ENCODE measurements at regions of chr13 and their contacts with region 1.

Region 1: GRCh38 chr13:113393563-113394338 is 29.8 kb upstream of the GRTP1 start:
- DNase-seq: peak; percentile 90
- H3K4me3 ChIP-seq: peak overlapping the region; percentile 59 to 64 (median 64)
- H3K27ac ChIP-seq: peak overlapping the region; percentile 47 to 67 (median 58)
- H3K4me1 ChIP-seq: peaks cover 0 to 16% (median 9%) of the 10 kb centered on the region in 4 donors
- H3K27me3 ChIP-seq: no peaks in the 10 kb centered on the region
- CTCF ChIP-seq: peak in 3 of 4 experiments; percentile 19 to 96 (median 58)
- EP300 ChIP-seq: no peak
- POLR2A ChIP-seq: no peak

Region 2: DNA sequence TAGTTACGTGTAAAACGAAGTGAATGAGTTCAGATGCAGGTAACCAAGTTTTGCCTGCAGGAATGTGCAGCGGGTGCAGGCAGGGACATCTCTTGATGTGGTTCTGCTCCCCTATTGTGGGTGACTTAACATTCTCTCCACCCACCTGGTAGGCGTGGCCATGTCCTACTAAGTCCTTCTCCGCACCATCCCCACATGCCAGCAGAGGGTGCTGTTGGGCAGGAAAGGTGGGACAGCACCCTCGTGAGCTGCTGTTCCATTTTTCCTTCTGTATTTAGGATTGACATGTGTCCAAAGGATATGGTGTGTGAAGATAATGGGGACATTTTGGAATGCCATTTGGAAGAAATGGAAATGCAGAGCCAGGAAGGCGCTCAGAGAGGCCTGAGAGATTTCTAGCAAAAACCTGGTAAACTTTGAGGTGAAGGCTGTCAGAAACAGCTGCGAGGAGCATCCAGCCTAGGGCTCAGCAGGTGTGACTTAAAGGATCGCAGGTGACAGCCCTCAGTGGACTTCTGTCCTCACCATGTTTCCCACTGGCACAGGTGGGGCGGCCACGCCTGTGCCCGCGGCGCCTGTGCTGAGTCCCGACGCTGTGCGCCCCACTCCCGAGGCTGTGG is 451.0 kb before region 1 on chr13:
- intact Hi-C with region 1: loop called (anchors 2 kb)
- DNase-seq: peak; percentile 96
- H3K4me3 ChIP-seq: peak overlapping the region in 3 of 4 donors; percentile 47 to 68 (median 54)
- H3K27ac ChIP-seq: peak overlapping the region; percentile 21 to 70 (median 43)
- H3K4me1 ChIP-seq: peaks cover 0 to 18% (median 12%) of the 10 kb centered on the region in 4 donors
- H3K27me3 ChIP-seq: no peaks in the 10 kb centered on the region
- CTCF ChIP-seq: peak; percentile 74 to 91 (median 86)
- EP300 ChIP-seq: no peak
- POLR2A ChIP-seq: no peak

Region 3: DNA sequence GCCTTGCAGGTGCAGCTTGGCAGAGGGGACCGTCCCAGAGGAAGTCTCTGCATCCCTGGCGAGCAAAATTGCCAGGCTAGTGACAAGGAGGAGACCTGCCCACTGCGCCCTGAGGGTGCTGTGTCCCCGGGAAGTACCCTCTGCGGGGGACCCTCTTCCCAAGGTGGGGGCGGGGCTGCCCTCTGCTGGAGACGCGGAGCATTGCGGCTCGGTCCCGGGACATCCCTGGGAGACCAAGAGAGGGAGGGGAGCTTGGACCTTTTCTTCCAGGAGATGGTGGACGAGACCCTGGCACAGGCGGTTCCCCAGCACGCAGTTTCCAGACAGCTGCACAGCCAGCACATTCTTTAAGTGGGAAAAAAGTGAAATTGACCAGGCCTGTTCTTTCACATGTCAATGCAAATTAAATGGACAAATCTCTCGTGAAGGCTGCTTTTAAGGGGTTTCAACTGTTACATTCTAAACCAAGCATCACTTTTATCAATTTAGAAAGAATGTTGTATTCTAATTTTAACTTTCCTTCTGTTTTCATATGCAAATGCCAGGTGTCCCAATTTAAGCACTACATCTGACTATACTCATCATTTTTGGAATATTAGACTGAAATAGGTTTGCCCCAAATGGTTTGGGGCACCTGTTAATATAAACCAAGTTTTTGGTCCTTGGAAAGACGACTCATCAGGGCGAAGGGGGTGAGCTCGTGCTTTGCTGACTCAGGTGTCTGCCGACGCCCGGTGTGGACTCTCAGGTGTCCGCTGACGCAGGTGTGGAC is 364.1 kb before region 1 on chr13:
- intact Hi-C with region 1: loop called (anchors 10 kb)
- DNase-seq: no peak
- H3K4me3 ChIP-seq: no peak overlapping the region
- H3K27ac ChIP-seq: no peak overlapping the region
- H3K4me1 ChIP-seq: peaks cover 0 to under 1% (median 0%) of the 10 kb centered on the region in 4 donors
- H3K27me3 ChIP-seq: peaks cover 0 to 33% (median 4%) of the 10 kb centered on the region in 3 donors
- CTCF ChIP-seq: peak in 3 of 4 experiments; percentile 52 to 58 (median 58)
- EP300 ChIP-seq: no peak
- POLR2A ChIP-seq: no peak

Region 4: GRCh38 chr13:113216254-113217048 is 177.3 kb before region 1 on chr13:
- intact Hi-C with region 1: no loop called
- DNase-seq: no peak
- H3K4me3 ChIP-seq: no peak overlapping the region
- H3K27ac ChIP-seq: peak overlapping the region; percentile 24 to 77 (median 60)
- H3K4me1 ChIP-seq: peaks cover 0 to 62% (median 39%) of the 10 kb centered on the region in 4 donors
- H3K27me3 ChIP-seq: no peaks in the 10 kb centered on the region
- CTCF ChIP-seq: no peak
- EP300 ChIP-seq: no peak
- POLR2A ChIP-seq: no peak

Region 5: DNA sequence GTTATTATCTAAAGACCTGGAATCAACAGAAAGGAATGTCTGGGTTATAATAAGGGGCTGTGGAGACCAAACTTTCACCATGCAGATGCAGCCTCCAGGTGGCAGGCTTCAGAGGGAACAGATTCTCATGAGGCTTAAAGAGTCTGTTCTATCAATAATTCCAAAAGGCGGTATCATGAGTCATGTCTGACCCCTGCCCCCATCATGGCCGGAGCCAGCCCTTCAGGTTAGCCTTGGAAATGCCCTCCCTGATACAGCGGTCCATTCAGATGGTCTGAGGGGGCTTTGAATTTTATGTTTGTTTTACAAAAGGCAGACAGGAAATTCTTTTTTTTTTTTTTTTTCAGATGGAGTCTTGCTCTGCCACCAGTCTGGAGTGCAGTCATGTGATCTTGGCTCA is 118.4 kb before region 1 on chr13:
- intact Hi-C with region 1: loop called (anchors 5 kb)
- DNase-seq: no peak
- H3K4me3 ChIP-seq: no peak overlapping the region
- H3K27ac ChIP-seq: no peak overlapping the region
- H3K4me1 ChIP-seq: no peaks in the 10 kb centered on the region
- H3K27me3 ChIP-seq: no peaks in the 10 kb centered on the region
- CTCF ChIP-seq: peak in 3 of 4 experiments; percentile 22 to 41 (median 41)
- EP300 ChIP-seq: no peak
- POLR2A ChIP-seq: no peak

Region 6: DNA sequence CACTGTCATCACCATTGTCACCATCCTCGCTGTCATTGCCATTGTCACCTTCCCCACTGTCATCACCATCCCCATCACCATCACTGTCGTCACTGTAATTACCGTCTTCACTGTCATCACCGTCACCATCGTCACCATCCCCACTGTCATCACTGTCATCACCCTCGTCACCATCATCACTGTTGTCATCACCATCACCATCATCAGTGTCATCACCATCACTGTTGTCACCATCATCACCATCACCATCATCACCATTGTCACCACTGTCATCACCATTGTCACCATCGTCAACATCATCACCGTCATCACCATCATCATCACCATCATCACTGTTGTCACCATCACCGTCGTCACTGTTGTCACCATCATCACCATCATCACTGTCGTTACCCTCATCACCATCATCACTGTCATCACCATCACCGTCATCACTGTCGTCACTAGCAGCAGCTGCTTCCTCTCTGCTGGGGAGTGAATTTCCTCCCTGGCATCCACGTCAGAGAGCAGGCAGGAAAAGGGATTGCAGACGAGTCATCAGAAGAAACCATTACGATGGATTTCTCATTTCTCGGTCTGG is 392.6 kb after region 1 on chr13:
- intact Hi-C with region 1: no loop called
- DNase-seq: no peak
- H3K4me3 ChIP-seq: no peak overlapping the region
- H3K27ac ChIP-seq: no peak overlapping the region
- H3K4me1 ChIP-seq: no peaks in the 10 kb centered on the region
- H3K27me3 ChIP-seq: peaks cover 0 to 11% (median 0%) of the 10 kb centered on the region in 3 donors
- CTCF ChIP-seq: no peak
- EP300 ChIP-seq: no peak
- POLR2A ChIP-seq: no peak